Transverse colon (tissue), 4 donors: ENCODE measurements at regions of chr2 and their contacts with region 1.

Region 1: DNA sequence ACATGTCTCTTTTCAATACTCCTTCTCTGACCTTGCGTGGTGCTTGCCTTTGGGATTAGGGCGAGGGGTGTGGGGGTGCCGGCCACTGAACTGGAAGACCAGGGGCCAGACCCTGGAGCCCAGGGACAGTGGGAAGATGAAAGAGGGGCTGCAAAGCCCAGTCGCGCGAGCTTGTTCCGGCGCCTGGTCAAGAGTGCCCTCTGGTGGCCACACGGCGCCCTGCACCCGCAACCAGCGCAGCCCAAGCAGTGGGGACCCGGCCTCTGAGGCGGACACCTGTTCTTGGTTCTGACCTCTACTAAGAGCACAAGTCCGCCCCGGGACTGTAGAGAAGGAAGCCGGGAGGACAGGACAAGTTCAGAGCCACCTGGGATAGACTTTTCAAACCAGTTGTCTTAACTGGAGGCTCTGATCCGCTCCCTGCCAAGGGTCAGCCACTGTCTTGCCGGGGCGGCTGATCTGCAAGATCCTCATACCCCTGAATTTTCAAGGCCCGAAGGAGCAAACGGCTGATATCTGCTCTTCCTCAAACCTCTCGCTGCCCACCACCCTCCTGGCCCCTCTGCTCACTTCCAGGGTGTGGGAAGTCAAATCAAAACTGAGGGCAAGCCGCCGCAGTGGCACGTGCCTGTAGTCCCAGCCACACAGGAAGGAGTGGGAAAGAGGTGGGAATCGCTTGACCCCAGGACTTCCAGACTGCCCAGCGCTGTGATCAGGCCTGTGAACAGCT is 14.9 kb upstream of the MSH6 start:
- DNase-seq: peak; percentile 70
- H3K4me3 ChIP-seq: no peak overlapping the region
- H3K27ac ChIP-seq: no peak overlapping the region
- H3K4me1 ChIP-seq: peaks cover 0 to 5% (median 0%) of the 10 kb centered on the region in 4 donors
- H3K27me3 ChIP-seq: no peaks in the 10 kb centered on the region
- CTCF ChIP-seq: peak; percentile 93 to 100 (median 100)
- EP300 ChIP-seq: no peak
- POLR2A ChIP-seq: no peak

Region 2: DNA sequence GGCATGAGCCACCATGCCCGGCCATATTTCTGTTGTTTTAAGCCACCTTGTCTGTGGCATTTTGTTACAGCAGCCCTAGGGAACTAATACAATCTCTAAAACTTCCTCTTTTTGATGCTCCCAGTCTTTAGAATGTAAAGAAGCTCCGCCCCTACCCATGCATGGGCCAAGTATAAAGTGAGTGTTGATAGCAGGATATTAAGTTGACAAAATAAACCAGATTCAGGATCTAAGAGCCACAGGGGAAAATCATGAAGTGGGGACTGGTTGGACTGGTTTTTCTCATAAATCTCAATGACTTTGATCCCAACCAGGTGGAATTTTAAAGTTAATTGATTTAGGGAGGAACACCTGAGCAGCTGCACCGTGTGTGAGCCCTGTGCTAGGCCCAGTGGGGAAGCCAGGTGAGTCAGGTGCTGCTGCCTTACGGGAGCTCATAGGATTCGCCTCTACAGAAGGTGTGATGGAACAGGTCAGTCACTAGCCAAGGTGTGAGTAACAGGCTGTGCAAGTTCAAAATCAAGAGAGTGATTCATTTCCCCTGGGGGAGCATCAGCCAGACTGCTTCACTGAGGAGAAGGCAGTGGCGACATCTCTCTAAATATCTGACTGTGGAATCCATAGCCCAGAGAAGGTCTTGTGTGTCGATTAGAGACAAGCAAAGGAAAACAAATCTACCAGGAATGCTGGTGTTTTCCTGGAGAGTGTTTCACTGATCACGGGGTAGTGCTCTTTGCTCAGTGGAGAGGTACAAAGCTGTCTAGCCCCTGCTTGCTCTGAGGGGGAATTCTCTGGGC is 428.1 kb before region 1 on chr2:
- in situ Hi-C with region 1: loop called in 3 of 4 experiments (anchors 10 kb)
- intact Hi-C with region 1: no loop called
- DNase-seq: peak; percentile 63
- H3K4me3 ChIP-seq: no peak overlapping the region
- H3K27ac ChIP-seq: peak overlapping the region; percentile 53 to 85 (median 70)
- H3K4me1 ChIP-seq: peaks cover 5 to 70% (median 33%) of the 10 kb centered on the region in 4 donors
- H3K27me3 ChIP-seq: no peaks in the 10 kb centered on the region
- CTCF ChIP-seq: no peak
- EP300 ChIP-seq: no peak
- POLR2A ChIP-seq: no peak

Region 3: GRCh38 chr2:47437287-47437686 is 330.8 kb before region 1 on chr2:
- in situ Hi-C with region 1: loop called in 2 of 4 experiments (anchors 10 kb)
- intact Hi-C with region 1: loop called (anchors 5 kb)
- DNase-seq: no peak
- H3K4me3 ChIP-seq: no peak overlapping the region
- H3K27ac ChIP-seq: no peak overlapping the region
- H3K4me1 ChIP-seq: no peaks in the 10 kb centered on the region
- H3K27me3 ChIP-seq: no peaks in the 10 kb centered on the region
- CTCF ChIP-seq: peak in 4 of 5 experiments; percentile 27 to 31 (median 30)
- EP300 ChIP-seq: no peak
- POLR2A ChIP-seq: no peak

Region 4: GRCh38 chr2:47636596-47637264 is 131.3 kb before region 1 on chr2:
- in situ Hi-C with region 1: no loop called
- intact Hi-C with region 1: no loop called
- DNase-seq: no peak
- H3K4me3 ChIP-seq: no peak overlapping the region
- H3K27ac ChIP-seq: no peak overlapping the region
- H3K4me1 ChIP-seq: peaks cover 0 to 3% (median 3%) of the 10 kb centered on the region in 4 donors
- H3K27me3 ChIP-seq: no peaks in the 10 kb centered on the region
- CTCF ChIP-seq: no peak
- EP300 ChIP-seq: no peak
- POLR2A ChIP-seq: no peak

Region 5: DNA sequence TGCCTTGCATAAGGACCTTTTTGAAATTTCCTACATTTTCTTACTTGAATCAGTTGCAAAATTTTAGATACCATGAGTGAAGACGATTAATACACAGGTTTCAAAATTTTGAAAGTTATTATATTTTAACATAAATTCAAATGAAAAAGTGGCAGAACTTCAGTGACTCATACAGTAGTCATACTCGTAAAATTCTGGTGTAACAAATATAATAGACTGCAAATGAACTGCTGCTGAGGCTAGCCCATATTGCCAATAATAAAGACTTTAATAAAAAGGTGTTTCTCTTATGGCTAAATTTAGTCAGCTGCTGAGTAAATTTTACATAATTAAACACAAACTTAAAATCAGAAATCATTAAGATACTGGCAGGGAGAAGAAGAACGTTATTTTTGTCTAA is 51.8 kb after region 1 on chr2:
- in situ Hi-C with region 1: no loop called
- intact Hi-C with region 1: no loop called
- DNase-seq: no peak
- H3K4me3 ChIP-seq: no peak overlapping the region
- H3K27ac ChIP-seq: no peak overlapping the region
- H3K4me1 ChIP-seq: no peaks in the 10 kb centered on the region
- H3K27me3 ChIP-seq: no peaks in the 10 kb centered on the region
- CTCF ChIP-seq: no peak
- EP300 ChIP-seq: no peak
- POLR2A ChIP-seq: no peak